Testis (tissue), 5 donors: ENCODE measurements at regions of chr2 and their contacts with region 1.

Region 1: GRCh38 chr2:38709567-38710194 is 41.5 kb downstream of the SRSF7 start:
- DNase-seq: peak; percentile 6
- H3K4me3 ChIP-seq: no peak overlapping the region
- H3K27ac ChIP-seq: no peak overlapping the region
- H3K4me1 ChIP-seq: no peaks in the 10 kb centered on the region
- H3K27me3 ChIP-seq: no peaks in the 10 kb centered on the region
- CTCF ChIP-seq: no peak
- POLR2A ChIP-seq: no peak

Region 2: GRCh38 chr2:38590053-38590452 is 119.6 kb before region 1 on chr2:
- intact Hi-C with region 1: loop called (anchors 5 kb)
- DNase-seq: no peak
- H3K4me3 ChIP-seq: no peak overlapping the region
- H3K27ac ChIP-seq: peak overlapping the region in 1 of 2 donors; percentile 17
- H3K4me1 ChIP-seq: peaks cover 30% of the 10 kb centered on the region
- H3K27me3 ChIP-seq: no peaks in the 10 kb centered on the region
- CTCF ChIP-seq: no peak
- POLR2A ChIP-seq: no peak